Endothelial cell of umbilical vein (primary cell): ENCODE measurements at regions of chr10 and their contacts with region 1.

Region 1: DNA sequence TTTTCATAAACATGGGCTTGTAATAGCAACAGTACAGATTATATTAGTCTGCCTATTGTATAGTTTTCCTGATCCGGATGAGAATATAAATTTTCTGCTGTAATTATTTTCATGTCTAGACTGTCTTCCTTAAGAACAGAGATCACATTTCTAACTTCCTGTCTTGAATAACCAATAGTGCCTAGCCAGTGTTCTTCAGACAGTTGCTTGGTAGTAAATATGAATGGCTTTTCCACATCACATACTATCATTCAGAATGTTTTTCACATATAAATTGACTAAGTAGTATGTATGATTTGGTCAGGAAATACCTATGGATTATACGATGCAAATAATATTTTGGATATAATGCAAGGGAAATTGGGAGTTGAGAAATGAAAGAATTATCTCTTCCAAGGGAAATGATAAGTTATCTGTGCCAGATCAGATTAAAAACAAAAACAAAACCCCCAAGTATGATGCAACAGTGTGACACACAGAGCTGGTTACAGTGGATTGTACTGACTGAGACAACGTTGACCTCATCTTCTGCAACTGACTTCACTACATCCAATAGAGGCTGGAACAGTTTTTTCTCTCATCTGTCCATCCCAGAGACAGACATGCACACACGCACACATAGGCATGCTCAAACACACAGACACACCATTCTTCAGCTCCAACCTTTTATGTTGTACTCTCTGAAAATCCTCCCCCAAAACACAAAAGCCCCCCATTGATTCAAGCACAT is 16.4 kb downstream of the ITGA8 start:
- DNase-seq: peak; percentile 49
- H3K4me3 ChIP-seq: no peak overlapping the region
- H3K27ac ChIP-seq: peak overlapping the region; percentile 53
- H3K4me1 ChIP-seq: peaks cover 30% of the 10 kb centered on the region
- H3K27me3 ChIP-seq: no peaks in the 10 kb centered on the region
- CTCF ChIP-seq: no peak
- POLR2A ChIP-seq: no peak

Region 2: GRCh38 chr10:15630353-15630752 is 73.0 kb before region 1 on chr10:
- CTCF ChIA-PET with region 1: no interaction called
- POLR2A ChIA-PET with region 1: no interaction called
- dilution Hi-C with region 1: no loop called
- intact Hi-C with region 1: loop called (anchors 2 kb)
- DNase-seq: peak; percentile 94
- H3K4me3 ChIP-seq: no peak overlapping the region
- H3K27ac ChIP-seq: peak overlapping the region; percentile 6
- H3K4me1 ChIP-seq: peaks cover 23% of the 10 kb centered on the region
- H3K27me3 ChIP-seq: no peaks in the 10 kb centered on the region
- CTCF ChIP-seq: no peak
- POLR2A ChIP-seq: no peak

Region 3: GRCh38 chr10:15813415-15813814 is 110.1 kb after region 1 on chr10:
- CTCF ChIA-PET with region 1: no interaction called
- POLR2A ChIA-PET with region 1: no interaction called
- dilution Hi-C with region 1: no loop called
- intact Hi-C with region 1: no loop called
- DNase-seq: peak; percentile 18
- H3K4me3 ChIP-seq: no peak overlapping the region
- H3K27ac ChIP-seq: no peak overlapping the region
- H3K4me1 ChIP-seq: peaks cover 4% of the 10 kb centered on the region
- H3K27me3 ChIP-seq: no peaks in the 10 kb centered on the region
- CTCF ChIP-seq: no peak
- POLR2A ChIP-seq: no peak